CD4-positive, alpha-beta memory T cell (primary cell): ENCODE measurements at regions of chr16 and their contacts with region 1.

Region 1: GRCh38 chr16:50548125-50548908 is at the start of gene NKD1:
- DNase-seq: peak; percentile 64 to 78 (median 69)
- H3K4me3 ChIP-seq: peak within 1 kb of the TSS in 1 of 2 donors; percentile 68
- H3K4me3 Mint-ChIP-seq: peak within 1 kb of the TSS; percentile 81 to 89 (median 88)
- H3K27ac ChIP-seq: peak within 1 kb of the TSS; percentile 43
- H3K27ac Mint-ChIP-seq: peak within 1 kb of the TSS; percentile 90 to 96 (median 95)
- H3K4me1 ChIP-seq: peaks cover 30% of the 10 kb centered on the region
- H3K4me1 Mint-ChIP-seq: peaks cover 14 to 35% (median 25%) of the 10 kb centered on the region in 4 donors
- H3K27me3 ChIP-seq: no peaks in the 10 kb centered on the region
- H3K27me3 Mint-ChIP-seq: no peaks in the 10 kb centered on the region
- total RNA-seq, gene NKD1: 3.8 to 4.6 TPM

Region 2: GRCh38 chr16:50152807-50153452 is 395.4 kb before region 1 on chr16 and contains the start of gene TENT4B:
- CTCF ChIA-PET with region 1: no interaction called
- POLR2A ChIA-PET with region 1: no interaction called
- intact Hi-C with region 1: loop called (anchors 5 kb)
- DNase-seq: peak; percentile 92 to 95 (median 94)
- H3K4me3 ChIP-seq: peak within 1 kb of the TSS; percentile 84 to 93
- H3K4me3 Mint-ChIP-seq: peak within 1 kb of the TSS; percentile 91 to 97 (median 94)
- H3K27ac ChIP-seq: peak within 1 kb of the TSS; percentile 89
- H3K27ac Mint-ChIP-seq: peak within 1 kb of the TSS; percentile 93 to 99 (median 97)
- H3K4me1 ChIP-seq: peaks cover 47% of the 10 kb centered on the region
- H3K4me1 Mint-ChIP-seq: peaks cover 25 to 41% (median 34%) of the 10 kb centered on the region in 4 donors
- H3K27me3 ChIP-seq: no peaks in the 10 kb centered on the region
- H3K27me3 Mint-ChIP-seq: no peaks in the 10 kb centered on the region
- total RNA-seq, gene TENT4B: 22.4 to 23.5 TPM

Region 3: GRCh38 chr16:50603206-50604064 is 55.1 kb after region 1 on chr16:
- CTCF ChIA-PET with region 1: no interaction called
- POLR2A ChIA-PET with region 1: interaction called, 4 read pairs
- intact Hi-C with region 1: loop called (anchors 5 kb)
- DNase-seq: no peak
- H3K4me3 ChIP-seq: no peak overlapping the region
- H3K4me3 Mint-ChIP-seq: peak overlapping the region in 2 of 8 donors; percentile 75 to 80
- H3K27ac ChIP-seq: no peak overlapping the region
- H3K27ac Mint-ChIP-seq: peak overlapping the region; percentile 33 to 94 (median 83)
- H3K4me1 ChIP-seq: peaks cover 37% of the 10 kb centered on the region
- H3K4me1 Mint-ChIP-seq: peaks cover 19 to 42% (median 32%) of the 10 kb centered on the region in 4 donors
- H3K27me3 ChIP-seq: no peaks in the 10 kb centered on the region
- H3K27me3 Mint-ChIP-seq: no peaks in the 10 kb centered on the region

Region 4: GRCh38 chr16:50627419-50627818 is 79.1 kb after region 1 on chr16:
- CTCF ChIA-PET with region 1: no interaction called
- POLR2A ChIA-PET with region 1: interaction called, 3 read pairs
- intact Hi-C with region 1: loop called (anchors 5 kb)
- DNase-seq: peak; percentile 32 to 48 (median 36)
- H3K4me3 ChIP-seq: no peak overlapping the region
- H3K4me3 Mint-ChIP-seq: peak overlapping the region in 7 of 8 donors; percentile 64 to 90 (median 78)
- H3K27ac ChIP-seq: no peak overlapping the region
- H3K27ac Mint-ChIP-seq: peak overlapping the region in 6 of 7 donors; percentile 64 to 87 (median 80)
- H3K4me1 ChIP-seq: peaks cover 25% of the 10 kb centered on the region
- H3K4me1 Mint-ChIP-seq: peaks cover 23 to 39% (median 31%) of the 10 kb centered on the region in 4 donors
- H3K27me3 ChIP-seq: no peaks in the 10 kb centered on the region
- H3K27me3 Mint-ChIP-seq: no peaks in the 10 kb centered on the region